H1 (cell line): ENCODE measurements at regions of chr5 and their contacts with region 1.

Region 1: DNA sequence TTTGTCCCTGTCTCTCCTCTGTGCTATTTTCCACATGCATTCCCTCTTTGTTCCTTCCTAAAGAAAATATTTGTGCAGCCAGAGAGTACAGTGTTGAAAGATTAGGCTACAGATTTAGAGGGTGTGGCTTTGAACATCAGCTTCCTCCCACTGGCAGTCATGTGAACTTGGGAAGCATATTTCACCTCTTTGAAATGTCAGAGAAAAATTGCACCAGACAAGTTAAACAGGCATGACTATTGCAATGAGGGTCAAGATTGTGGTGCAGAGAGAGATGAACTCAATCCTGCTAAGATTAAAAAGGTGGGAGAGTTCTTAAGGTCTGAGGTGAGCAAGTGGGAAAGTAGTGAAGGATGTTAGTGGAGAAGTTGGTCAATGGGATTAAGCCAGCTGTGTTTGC is 641.0 kb downstream of the DNAH5 start:
- DNase-seq: no peak
- H3K4me3 ChIP-seq: no peak overlapping the region
- H3K27ac ChIP-seq: no peak overlapping the region
- H3K4me1 ChIP-seq: no peaks in the 10 kb centered on the region
- H3K27me3 ChIP-seq: no peaks in the 10 kb centered on the region
- CTCF ChIP-seq: no peak
- EP300 ChIP-seq: no peak
- POLR2A ChIP-seq: no peak
- RAD21 ChIP-seq: no peak

Region 2: GRCh38 chr5:13278148-13278547 is 25.3 kb before region 1 on chr5:
- CTCF ChIA-PET with region 1: interaction called, 10 read pairs
- POLR2A ChIA-PET with region 1: no interaction called
- DNase-seq: no peak
- H3K4me3 ChIP-seq: no peak overlapping the region
- H3K27ac ChIP-seq: no peak overlapping the region
- H3K4me1 ChIP-seq: no peaks in the 10 kb centered on the region
- H3K27me3 ChIP-seq: no peaks in the 10 kb centered on the region
- CTCF ChIP-seq: peak in 1 of 3 experiments; percentile 28; a peak in 1 of 4 replicates
- EP300 ChIP-seq: no peak
- POLR2A ChIP-seq: no peak
- RAD21 ChIP-seq: peak in 1 of 2 experiments; percentile 15; a peak in 3 of 4 replicates